Breast epithelium (tissue), 4 donors: ENCODE measurements at regions of chr5 and their contacts with region 1.

Region 1: GRCh38 chr5:104237586-104237985 is 675.0 kb upstream of the NUDT12 start:
- DNase-seq: no peak
- H3K4me3 ChIP-seq: no peak overlapping the region
- H3K27ac ChIP-seq: no peak overlapping the region
- H3K4me1 ChIP-seq: no peaks in the 10 kb centered on the region
- H3K27me3 ChIP-seq: no peaks in the 10 kb centered on the region
- CTCF ChIP-seq: no peak
- POLR2A ChIP-seq: no peak

Region 2: GRCh38 chr5:104178829-104179456 is 58.6 kb before region 1 on chr5:
- intact Hi-C with region 1: loop called (anchors 2 kb)
- DNase-seq: no peak
- H3K4me3 ChIP-seq: no peak overlapping the region
- H3K27ac ChIP-seq: no peak overlapping the region
- H3K4me1 ChIP-seq: no peaks in the 10 kb centered on the region
- H3K27me3 ChIP-seq: no peaks in the 10 kb centered on the region
- CTCF ChIP-seq: peak in 1 of 3 donors; percentile 29
- POLR2A ChIP-seq: no peak

Region 3: GRCh38 chr5:104199771-104200170 is 37.8 kb before region 1 on chr5:
- intact Hi-C with region 1: no loop called
- DNase-seq: no peak
- H3K4me3 ChIP-seq: no peak overlapping the region
- H3K27ac ChIP-seq: no peak overlapping the region
- H3K4me1 ChIP-seq: no peaks in the 10 kb centered on the region
- H3K27me3 ChIP-seq: no peaks in the 10 kb centered on the region
- CTCF ChIP-seq: no peak
- POLR2A ChIP-seq: no peak